ENCODE measurements at regions of chr5 and their contacts with region 1.

Region 1: GRCh38 chr5:61290791-61291210 is 41.3 kb upstream of the ZSWIM6 start:
- DNase-seq: peak; percentile 67
- H3K4me3 Mint-ChIP-seq: peak overlapping the region; percentile 68
- H3K27ac Mint-ChIP-seq: peak overlapping the region; percentile 99
- H3K4me1 Mint-ChIP-seq: peaks cover 74% of the 10 kb centered on the region
- H3K27me3 Mint-ChIP-seq: no peaks in the 10 kb centered on the region
- CTCF ChIP-seq: no peak

Region 2: GRCh38 chr5:61162010-61162831 is 128.6 kb before region 1 on chr5 and contains the start of gene SMIM15:
- CTCF ChIA-PET with region 1: interaction called, 3 read pairs
- intact Hi-C with region 1: loop called (anchors 2 kb)
- DNase-seq: peak; percentile 91
- H3K4me3 Mint-ChIP-seq: peak within 1 kb of the TSS; percentile 90
- H3K27ac Mint-ChIP-seq: peak within 1 kb of the TSS; percentile 95
- H3K4me1 Mint-ChIP-seq: peaks cover 22% of the 10 kb centered on the region
- H3K27me3 Mint-ChIP-seq: no peaks in the 10 kb centered on the region
- CTCF ChIP-seq: no peak
- total RNA-seq, gene SMIM15: 89.6 and 100 TPM in 2 replicates

Region 3: GRCh38 chr5:61245936-61246335 is 44.9 kb before region 1 on chr5:
- CTCF ChIA-PET with region 1: no interaction called
- intact Hi-C with region 1: loop called (anchors 2 kb)
- DNase-seq: peak; percentile 40
- H3K4me3 Mint-ChIP-seq: peak overlapping the region; percentile 30
- H3K27ac Mint-ChIP-seq: no peak overlapping the region
- H3K4me1 Mint-ChIP-seq: peaks cover 22% of the 10 kb centered on the region
- H3K27me3 Mint-ChIP-seq: no peaks in the 10 kb centered on the region
- CTCF ChIP-seq: no peak

Region 4: DNA sequence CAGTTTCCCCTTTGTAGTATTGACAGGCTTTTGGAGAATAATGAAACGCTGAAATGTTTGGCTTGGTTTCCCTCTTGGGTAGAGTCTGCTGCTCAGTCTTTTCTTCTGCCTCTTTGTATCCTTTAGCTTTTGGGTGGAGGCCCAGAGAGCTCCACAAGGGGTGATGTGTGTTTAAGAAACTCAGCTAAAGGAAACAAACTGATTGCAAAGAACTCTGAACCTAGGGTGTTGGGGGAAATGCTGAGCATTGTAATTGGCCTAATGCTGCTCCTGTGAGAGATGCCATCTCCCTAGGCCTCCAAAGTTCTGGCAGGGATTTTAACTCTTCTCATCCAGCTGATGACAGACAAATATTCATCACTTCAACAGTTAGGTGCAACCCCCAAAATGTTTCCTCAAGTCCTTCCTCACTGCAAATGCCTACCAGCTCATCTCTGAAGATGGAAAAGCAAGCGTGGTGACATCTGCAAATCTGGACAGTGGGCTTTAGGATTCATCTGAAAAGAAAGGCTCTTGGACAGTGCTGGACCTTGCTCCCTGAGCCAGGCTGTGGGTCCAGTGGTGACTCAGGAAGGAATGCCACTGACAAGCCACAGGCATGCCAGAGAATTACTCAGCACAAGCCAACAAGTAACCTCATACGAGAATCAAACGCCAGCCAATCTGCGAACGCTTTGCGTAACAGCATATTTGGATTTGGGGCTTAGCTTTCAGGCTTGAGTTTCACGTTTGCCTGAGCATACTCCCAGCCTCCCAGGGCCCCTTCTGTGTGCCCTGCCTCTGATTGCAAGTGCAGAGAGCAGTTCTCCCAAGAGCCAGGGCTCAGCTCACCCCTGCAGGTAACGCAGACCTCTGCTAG is 10.8 kb after region 1 on chr5:
- CTCF ChIA-PET with region 1: interaction called, 11 read pairs
- intact Hi-C with region 1: loop called (anchors 1 kb)
- DNase-seq: peak; percentile 86
- H3K4me3 Mint-ChIP-seq: peak overlapping the region; percentile 68
- H3K27ac Mint-ChIP-seq: peak overlapping the region; percentile 92
- H3K4me1 Mint-ChIP-seq: peaks cover 64% of the 10 kb centered on the region
- H3K27me3 Mint-ChIP-seq: no peaks in the 10 kb centered on the region
- CTCF ChIP-seq: no peak

Region 5: DNA sequence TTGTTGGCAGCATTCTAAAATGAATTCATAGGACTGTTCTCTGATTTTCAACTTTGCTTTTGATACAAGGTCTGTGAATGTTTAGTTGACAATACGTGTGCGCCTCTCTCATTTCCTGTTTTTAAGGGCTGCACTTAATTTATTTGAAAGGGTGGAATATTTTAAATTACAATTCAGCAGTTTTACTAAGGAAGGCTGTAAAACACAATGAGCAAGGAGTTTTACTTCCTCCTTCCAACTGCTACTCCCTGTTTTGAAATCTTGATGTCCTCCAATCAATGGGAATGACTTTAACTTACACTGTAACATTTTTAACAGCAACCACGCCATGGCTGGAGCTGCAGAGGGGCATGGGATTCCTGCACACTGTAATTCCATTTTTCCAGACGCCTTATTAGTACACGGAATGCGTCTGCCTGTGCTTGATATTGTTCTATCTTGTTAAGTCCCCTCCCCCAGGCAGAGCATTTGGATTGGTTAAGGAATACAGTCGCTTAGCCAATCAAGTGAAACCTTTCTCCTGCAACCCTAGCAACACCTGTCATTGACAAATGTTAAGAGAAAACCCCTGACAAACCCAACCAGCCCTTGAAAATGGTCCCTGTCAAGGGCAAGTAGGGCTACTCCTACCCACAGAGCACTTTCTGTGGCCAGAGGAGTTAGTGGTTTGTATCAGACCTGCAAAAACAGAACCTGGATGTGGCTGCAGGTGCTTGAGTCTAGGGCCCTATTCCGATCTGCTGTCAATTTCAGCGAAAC is 28.8 kb after region 1 on chr5:
- CTCF ChIA-PET with region 1: no interaction called
- intact Hi-C with region 1: no loop called
- DNase-seq: no peak
- H3K4me3 Mint-ChIP-seq: no peak overlapping the region
- H3K27ac Mint-ChIP-seq: no peak overlapping the region
- H3K4me1 Mint-ChIP-seq: peaks cover 24% of the 10 kb centered on the region
- H3K27me3 Mint-ChIP-seq: no peaks in the 10 kb centered on the region
- CTCF ChIP-seq: no peak

Measured in Calu3 (cell line).